ENCODE measurements at regions of chr3 and their contacts with region 1.

Region 1: GRCh38 chr3:132722164-132723024 is at the start of gene NPHP3:
- DNase-seq: peak; percentile 97 to 99
- H3K4me3 ChIP-seq: peak within 1 kb of the TSS; percentile 95 to 99
- H3K27ac ChIP-seq: peak within 1 kb of the TSS; percentile 88 to 100
- H3K4me1 ChIP-seq: peaks cover 0 to 39% (median 19%) of the 10 kb centered on the region in 4 donors
- H3K27me3 ChIP-seq: no peaks in the 10 kb centered on the region
- CTCF ChIP-seq: peak in 1 of 2 experiments; percentile 29

Region 2: GRCh38 chr3:132907293-132907692 is 184.9 kb after region 1 on chr3:
- intact Hi-C with region 1: no loop called
- DNase-seq: no peak
- H3K4me3 ChIP-seq: no peak overlapping the region
- H3K27ac ChIP-seq: no peak overlapping the region
- H3K4me1 ChIP-seq: no peaks in the 10 kb centered on the region
- H3K27me3 ChIP-seq: no peaks in the 10 kb centered on the region
- CTCF ChIP-seq: no peak

Region 3: GRCh38 chr3:133573054-133573628 is 850.7 kb after region 1 on chr3:
- intact Hi-C with region 1: loop called (anchors 10 kb)
- DNase-seq: peak; percentile 100
- H3K4me3 ChIP-seq: peak overlapping the region; percentile 76 to 87
- H3K27ac ChIP-seq: peak overlapping the region; percentile 95 to 97
- H3K4me1 ChIP-seq: peaks cover 0 to 60% (median 40%) of the 10 kb centered on the region in 4 donors
- H3K27me3 ChIP-seq: no peaks in the 10 kb centered on the region
- CTCF ChIP-seq: peak in 1 of 2 experiments; percentile 36

Measured in tibial artery (tissue), 4 donors.